PC-3 (cell line): ENCODE measurements at regions of chr2 and their contacts with region 1.

Region 1: GRCh38 chr2:158968396-158969161 is at the start of gene TANC1:
- DNase-seq: peak; percentile 94
- ATAC-seq: peak; percentile 81
- H3K4me3 ChIP-seq: peak within 1 kb of the TSS; percentile 77
- H3K27ac ChIP-seq: peak within 1 kb of the TSS; percentile 64
- H3K4me1 ChIP-seq: peaks cover 39% of the 10 kb centered on the region
- H3K27me3 ChIP-seq: no peaks in the 10 kb centered on the region
- CTCF ChIP-seq: no peak
- total RNA-seq, gene TANC1: 17.6 and 18.7 TPM in 2 replicates

Region 2: DNA sequence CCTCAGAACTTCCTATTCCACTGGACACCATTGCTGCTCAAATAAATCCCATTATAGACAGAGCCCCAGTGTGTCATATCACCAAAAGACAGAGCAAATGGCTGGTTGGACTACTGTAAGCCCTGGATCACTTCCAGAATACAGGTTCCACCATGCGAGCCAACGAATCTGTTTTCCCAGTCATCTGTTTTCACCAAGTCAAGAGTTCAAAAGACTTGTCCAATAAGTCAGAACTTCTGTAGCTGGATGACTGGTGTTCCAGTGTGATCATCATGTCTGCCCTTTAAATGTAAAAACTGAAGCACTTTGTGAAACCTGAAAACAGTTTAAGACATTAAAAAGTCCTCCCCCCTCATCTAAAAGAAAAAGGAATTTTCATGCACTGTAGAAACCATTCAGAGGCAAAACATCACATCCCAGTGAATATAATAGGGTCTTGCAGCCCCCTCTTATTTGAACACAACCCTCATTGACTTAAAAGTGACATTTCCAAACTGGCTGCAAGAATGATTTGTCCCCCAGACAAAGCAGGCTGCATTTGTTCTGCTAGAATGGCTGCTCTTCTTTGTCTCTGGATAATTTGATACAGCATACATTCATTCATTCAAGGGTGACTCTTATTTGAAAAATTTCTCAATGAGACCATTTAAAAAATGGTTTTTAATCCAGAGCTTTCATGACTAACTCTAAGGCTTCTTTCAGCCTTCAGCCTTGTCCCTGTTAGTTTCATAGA is 64.7 kb before region 1 on chr2:
- CTCF ChIA-PET with region 1: no interaction called
- POLR2A ChIA-PET with region 1: no interaction called
- intact Hi-C with region 1: loop called (anchors 1 kb)
- DNase-seq: no peak
- ATAC-seq: no peak
- H3K4me3 ChIP-seq: no peak overlapping the region
- H3K27ac ChIP-seq: no peak overlapping the region
- H3K4me1 ChIP-seq: no peaks in the 10 kb centered on the region
- H3K27me3 ChIP-seq: no peaks in the 10 kb centered on the region
- CTCF ChIP-seq: no peak

Region 3: GRCh38 chr2:158926478-158926948 is 42.1 kb before region 1 on chr2:
- CTCF ChIA-PET with region 1: no interaction called
- POLR2A ChIA-PET with region 1: interaction called, 10 read pairs
- intact Hi-C with region 1: loop called (anchors 5 kb)
- DNase-seq: peak; percentile 79
- ATAC-seq: peak; percentile 66
- H3K4me3 ChIP-seq: peak overlapping the region; percentile 27; the same call in 1 of the 2 replicates
- H3K27ac ChIP-seq: peak overlapping the region; percentile 38
- H3K4me1 ChIP-seq: peaks cover 45% of the 10 kb centered on the region
- H3K27me3 ChIP-seq: no peaks in the 10 kb centered on the region
- CTCF ChIP-seq: no peak

Region 4: GRCh38 chr2:158994920-158995676 is 26.5 kb after region 1 on chr2:
- CTCF ChIA-PET with region 1: no interaction called
- POLR2A ChIA-PET with region 1: no interaction called
- intact Hi-C with region 1: loop called (anchors 2 kb)
- DNase-seq: no peak
- ATAC-seq: no peak
- H3K4me3 ChIP-seq: no peak overlapping the region
- H3K27ac ChIP-seq: no peak overlapping the region
- H3K4me1 ChIP-seq: peaks cover 93% of the 10 kb centered on the region
- H3K27me3 ChIP-seq: no peaks in the 10 kb centered on the region
- CTCF ChIP-seq: no peak

Region 5: DNA sequence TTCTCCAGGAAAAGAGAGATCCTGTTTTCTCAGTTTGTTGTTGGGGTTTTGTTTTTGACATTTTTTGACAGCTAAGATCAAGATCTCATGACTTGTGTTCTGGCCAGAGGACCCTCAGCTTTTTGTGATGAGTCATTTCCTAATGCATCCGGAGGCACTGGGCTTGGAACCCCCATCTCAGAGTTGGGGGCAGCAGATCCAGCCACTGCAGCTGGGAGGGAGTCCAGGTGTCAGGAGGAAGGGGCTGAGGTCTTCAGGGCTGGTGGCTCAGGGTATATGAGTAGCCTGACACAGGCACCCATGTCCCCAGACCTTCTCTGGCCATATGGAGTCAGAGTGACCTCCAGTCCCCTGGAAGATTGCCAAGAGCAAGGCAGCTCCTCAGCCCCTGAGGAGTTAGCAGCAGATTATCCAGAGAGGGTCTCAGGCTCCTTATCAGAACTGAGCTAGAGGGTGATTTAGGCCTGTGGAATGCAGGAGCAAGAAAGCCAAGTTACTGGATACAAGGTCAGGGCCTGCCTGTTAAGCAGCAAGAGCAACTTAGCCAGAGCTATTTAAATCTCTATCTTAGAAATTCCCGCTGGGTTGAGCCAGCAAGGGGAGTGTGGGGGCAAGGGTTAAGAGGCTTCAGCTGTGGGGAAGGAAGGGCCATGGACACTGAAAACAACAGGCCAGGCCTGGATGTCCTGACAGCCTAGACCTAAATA is 62.2 kb after region 1 on chr2:
- CTCF ChIA-PET with region 1: interaction called, 3 read pairs
- POLR2A ChIA-PET with region 1: no interaction called
- intact Hi-C with region 1: loop called (anchors 5 kb)
- DNase-seq: peak; percentile 51
- ATAC-seq: peak; percentile 65
- H3K4me3 ChIP-seq: no peak overlapping the region
- H3K27ac ChIP-seq: no peak overlapping the region
- H3K4me1 ChIP-seq: peaks cover 17% of the 10 kb centered on the region
- H3K27me3 ChIP-seq: no peaks in the 10 kb centered on the region
- CTCF ChIP-seq: no peak

Region 6: GRCh38 chr2:159098815-159099455 is 130.4 kb after region 1 on chr2:
- CTCF ChIA-PET with region 1: no interaction called
- POLR2A ChIA-PET with region 1: no interaction called
- intact Hi-C with region 1: loop called (anchors 5 kb)
- DNase-seq: peak; percentile 91
- ATAC-seq: peak; percentile 71
- H3K4me3 ChIP-seq: peak overlapping the region; percentile 47
- H3K27ac ChIP-seq: peak overlapping the region; percentile 98
- H3K4me1 ChIP-seq: peaks cover 41% of the 10 kb centered on the region
- H3K27me3 ChIP-seq: no peaks in the 10 kb centered on the region
- CTCF ChIP-seq: no peak

Region 7: DNA sequence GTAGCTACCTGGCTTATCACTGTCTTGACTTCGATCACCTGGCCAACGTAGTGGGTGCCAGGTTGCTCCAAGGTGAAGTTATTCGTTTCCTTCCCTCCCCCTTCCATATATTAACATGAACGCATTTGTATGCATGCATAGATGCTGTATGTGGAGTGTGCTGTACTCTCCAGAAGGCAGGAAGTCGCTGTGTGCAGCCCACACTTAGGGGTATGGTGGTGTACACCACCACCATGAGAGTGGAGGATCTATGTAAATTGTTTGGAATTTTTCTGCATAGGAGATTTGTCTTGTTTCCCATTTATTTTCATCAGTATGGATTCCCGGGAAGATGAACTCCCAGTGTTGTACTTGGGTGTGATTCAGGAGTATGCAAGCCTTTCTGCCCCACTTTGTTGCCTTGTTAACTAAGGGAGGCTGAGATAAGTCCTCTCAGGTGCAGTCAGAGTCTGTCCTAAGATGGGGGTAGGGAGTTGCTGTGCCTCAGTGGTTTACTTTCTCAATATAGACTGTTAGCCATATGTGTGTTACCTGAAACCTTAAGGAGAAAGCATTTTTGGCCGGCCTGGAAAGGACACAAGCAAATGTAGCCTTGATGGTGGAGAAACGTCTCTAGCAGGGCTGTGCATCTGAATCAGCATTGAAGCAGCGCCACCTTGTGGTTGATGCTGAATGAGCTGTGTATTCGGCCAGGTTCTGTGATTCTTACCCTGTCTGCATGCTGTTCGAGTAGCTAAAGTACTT is 149.7 kb after region 1 on chr2:
- CTCF ChIA-PET with region 1: interaction called, 6 read pairs
- POLR2A ChIA-PET with region 1: no interaction called
- intact Hi-C with region 1: loop called (anchors 2 kb)
- DNase-seq: peak; percentile 89
- ATAC-seq: peak; percentile 91
- H3K4me3 ChIP-seq: no peak overlapping the region
- H3K27ac ChIP-seq: peak overlapping the region; percentile 18; the same call in 1 of the 2 replicates
- H3K4me1 ChIP-seq: peaks cover 10% of the 10 kb centered on the region
- H3K27me3 ChIP-seq: no peaks in the 10 kb centered on the region
- CTCF ChIP-seq: peak; percentile 96